Naive thymus-derived CD4-positive, alpha-beta T cell (primary cell): ENCODE measurements at regions of chr18 and their contacts with region 1.

Region 1: DNA sequence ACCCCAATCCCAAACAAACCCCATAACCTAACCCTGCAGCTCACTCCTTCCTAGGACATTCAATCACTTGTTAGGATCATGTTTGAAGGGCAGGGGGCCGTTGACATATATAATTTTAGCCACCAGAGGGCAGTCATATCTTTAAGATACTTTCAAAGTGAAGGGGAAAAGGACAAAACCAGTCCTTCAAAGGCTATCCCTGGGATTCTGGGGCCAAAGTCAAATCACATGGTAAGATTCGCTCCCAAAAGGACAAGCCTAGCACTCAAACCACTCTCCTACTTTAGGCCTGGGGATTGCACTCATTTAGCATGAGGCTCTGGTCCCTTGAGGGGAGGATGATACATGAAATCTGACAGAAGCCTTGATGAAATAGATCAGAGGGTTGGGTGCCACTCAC is 44.6 kb downstream of the HAUS1 start:
- DNase-seq: peak; percentile 14 to 65 (median 51)
- ATAC-seq: peak; percentile 70
- H3K4me3 ChIP-seq: no peak overlapping the region
- H3K4me3 Mint-ChIP-seq: peak overlapping the region in 6 of 10 donors; percentile 5 to 39 (median 28)
- H3K27ac ChIP-seq: no peak overlapping the region
- H3K27ac Mint-ChIP-seq: peak overlapping the region; percentile 9 to 87 (median 75)
- H3K4me1 ChIP-seq: peaks cover 21 to 43% of the 10 kb centered on the region in 2 donors
- H3K4me1 Mint-ChIP-seq: peaks cover 9 to 48% (median 45%) of the 10 kb centered on the region in 7 donors
- H3K27me3 ChIP-seq: no peaks in the 10 kb centered on the region
- H3K27me3 Mint-ChIP-seq: peaks cover 0 to 3% (median 0%) of the 10 kb centered on the region in 5 donors

Region 2: GRCh38 chr18:45755934-45756333 is 392.9 kb before region 1 on chr18:
- CTCF ChIA-PET with region 1: no interaction called
- POLR2A ChIA-PET with region 1: no interaction called
- intact Hi-C with region 1: no loop called
- DNase-seq: no peak
- ATAC-seq: no peak
- H3K4me3 ChIP-seq: no peak overlapping the region
- H3K4me3 Mint-ChIP-seq: no peak overlapping the region
- H3K27ac ChIP-seq: no peak overlapping the region
- H3K27ac Mint-ChIP-seq: no peak overlapping the region
- H3K4me1 ChIP-seq: no peaks in the 10 kb centered on the region
- H3K4me1 Mint-ChIP-seq: peaks cover 0 to 2% (median 0%) of the 10 kb centered on the region in 7 donors
- H3K27me3 ChIP-seq: no peaks in the 10 kb centered on the region
- H3K27me3 Mint-ChIP-seq: peaks cover 10 to 31% (median 25%) of the 10 kb centered on the region in 5 donors

Region 3: GRCh38 chr18:46097801-46098615 is 50.8 kb before region 1 on chr18 and contains the start of gene ATP5F1A:
- CTCF ChIA-PET with region 1: no interaction called
- POLR2A ChIA-PET with region 1: no interaction called
- intact Hi-C with region 1: no loop called
- DNase-seq: peak; percentile 69 to 86 (median 80)
- ATAC-seq: peak; percentile 94
- H3K4me3 ChIP-seq: peak within 1 kb of the TSS; percentile 92
- H3K4me3 Mint-ChIP-seq: peak within 1 kb of the TSS; percentile 92 to 99 (median 96)
- H3K27ac ChIP-seq: peak within 1 kb of the TSS; percentile 94
- H3K27ac Mint-ChIP-seq: peak within 1 kb of the TSS; percentile 94 to 99 (median 97)
- H3K4me1 ChIP-seq: peaks cover 18 to 32% of the 10 kb centered on the region in 2 donors
- H3K4me1 Mint-ChIP-seq: peaks cover 18 to 43% (median 35%) of the 10 kb centered on the region in 7 donors
- H3K27me3 ChIP-seq: no peaks in the 10 kb centered on the region
- H3K27me3 Mint-ChIP-seq: peaks cover 0 to 2% (median 0%) of the 10 kb centered on the region in 5 donors
- total RNA-seq, gene ATP5F1A: 181 to 311 (median 212) TPM

Region 4: GRCh38 chr18:46213295-46213694 is 64.5 kb after region 1 on chr18:
- CTCF ChIA-PET with region 1: interaction called, 10 read pairs
- POLR2A ChIA-PET with region 1: no interaction called
- intact Hi-C with region 1: loop called (anchors 1 kb)
- DNase-seq: peak in 7 of 9 donors; percentile 20 to 47 (median 31)
- ATAC-seq: peak; percentile 69
- H3K4me3 ChIP-seq: no peak overlapping the region
- H3K4me3 Mint-ChIP-seq: peak overlapping the region in 9 of 10 donors; percentile 4 to 72 (median 43)
- H3K27ac ChIP-seq: no peak overlapping the region
- H3K27ac Mint-ChIP-seq: peak overlapping the region in 4 of 9 donors; percentile 27 to 62 (median 56)
- H3K4me1 ChIP-seq: peaks cover 21% of the 10 kb centered on the region in 2 donors
- H3K4me1 Mint-ChIP-seq: peaks cover 40 to 96% (median 84%) of the 10 kb centered on the region in 7 donors
- H3K27me3 ChIP-seq: no peaks in the 10 kb centered on the region
- H3K27me3 Mint-ChIP-seq: no peaks in the 10 kb centered on the region

Region 5: DNA sequence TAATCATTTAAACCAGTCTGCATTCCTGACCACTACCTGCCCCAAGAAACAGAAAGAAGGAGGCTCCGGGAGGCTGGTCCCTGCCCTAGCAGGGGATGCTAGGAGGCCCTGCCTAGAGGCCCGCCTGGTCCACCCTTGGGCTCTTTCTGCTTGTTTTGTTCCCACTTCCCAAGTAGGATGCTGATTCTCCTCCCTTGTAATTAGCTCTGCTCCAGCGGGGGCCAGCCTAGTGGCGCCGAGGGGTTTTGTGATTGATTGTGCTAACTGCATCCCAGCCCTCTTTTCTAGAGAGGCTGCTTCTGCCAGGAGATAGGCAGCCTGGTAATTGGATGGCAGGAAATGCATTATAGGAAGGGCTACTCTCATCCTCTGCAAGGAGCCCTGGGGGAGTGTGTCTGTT is 288.3 kb after region 1 on chr18:
- CTCF ChIA-PET with region 1: no interaction called
- POLR2A ChIA-PET with region 1: no interaction called
- intact Hi-C with region 1: no loop called
- DNase-seq: no peak
- ATAC-seq: no peak
- H3K4me3 ChIP-seq: no peak overlapping the region
- H3K4me3 Mint-ChIP-seq: no peak overlapping the region
- H3K27ac ChIP-seq: no peak overlapping the region
- H3K27ac Mint-ChIP-seq: no peak overlapping the region
- H3K4me1 ChIP-seq: no peaks in the 10 kb centered on the region
- H3K4me1 Mint-ChIP-seq: peaks cover 0 to 5% (median 0%) of the 10 kb centered on the region in 7 donors
- H3K27me3 ChIP-seq: no peaks in the 10 kb centered on the region
- H3K27me3 Mint-ChIP-seq: peaks cover 0 to 12% (median 5%) of the 10 kb centered on the region in 5 donors

Region 6: DNA sequence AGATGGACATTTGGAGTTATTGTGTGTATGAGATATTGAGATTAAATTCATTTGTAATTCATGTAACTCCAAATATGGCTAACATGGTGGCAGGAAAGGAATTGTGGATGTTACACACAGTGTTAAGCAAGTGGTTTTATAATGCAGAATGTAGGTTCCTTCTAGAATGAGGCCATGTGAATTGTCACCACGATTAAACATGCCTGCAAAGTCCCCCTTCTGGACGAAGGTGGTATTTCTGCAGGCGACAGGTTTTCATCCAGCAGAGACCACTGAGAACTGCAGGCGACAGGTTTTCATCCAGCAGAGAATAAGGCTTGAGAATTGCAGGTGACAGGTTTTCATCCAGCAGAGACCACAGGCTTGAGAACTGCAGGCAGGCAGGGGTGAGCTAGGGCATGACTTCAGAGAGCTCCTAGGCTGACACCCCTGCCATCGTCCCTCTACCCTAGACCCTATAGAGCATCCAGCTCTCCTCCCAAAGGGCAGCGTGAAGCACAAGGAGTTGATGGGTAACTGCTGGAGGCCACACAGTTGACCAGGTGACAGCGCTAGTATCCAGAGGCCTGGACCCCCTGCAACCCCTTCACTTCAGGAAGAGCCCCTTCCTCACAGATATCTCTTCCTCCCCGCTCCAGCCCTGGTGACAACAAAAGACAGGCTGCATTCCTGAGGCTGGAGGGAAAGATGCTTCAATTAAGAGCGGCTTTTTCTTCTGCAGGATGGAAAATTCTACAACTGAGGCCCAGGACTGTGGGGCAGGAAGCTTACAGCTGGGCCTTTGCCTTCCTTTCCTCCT is 332.4 kb after region 1 on chr18:
- CTCF ChIA-PET with region 1: interaction called, 8 read pairs
- POLR2A ChIA-PET with region 1: no interaction called
- intact Hi-C with region 1: loop called in 1 of 2 experiments (anchors 1 kb)
- DNase-seq: peak in 6 of 9 donors; percentile 31 to 60 (median 40)
- ATAC-seq: peak; percentile 67
- H3K4me3 ChIP-seq: no peak overlapping the region
- H3K4me3 Mint-ChIP-seq: no peak overlapping the region
- H3K27ac ChIP-seq: no peak overlapping the region
- H3K27ac Mint-ChIP-seq: no peak overlapping the region
- H3K4me1 ChIP-seq: no peaks in the 10 kb centered on the region
- H3K4me1 Mint-ChIP-seq: no peaks in the 10 kb centered on the region
- H3K27me3 ChIP-seq: no peaks in the 10 kb centered on the region
- H3K27me3 Mint-ChIP-seq: peaks cover 0 to 22% (median 10%) of the 10 kb centered on the region in 5 donors

Region 7: DNA sequence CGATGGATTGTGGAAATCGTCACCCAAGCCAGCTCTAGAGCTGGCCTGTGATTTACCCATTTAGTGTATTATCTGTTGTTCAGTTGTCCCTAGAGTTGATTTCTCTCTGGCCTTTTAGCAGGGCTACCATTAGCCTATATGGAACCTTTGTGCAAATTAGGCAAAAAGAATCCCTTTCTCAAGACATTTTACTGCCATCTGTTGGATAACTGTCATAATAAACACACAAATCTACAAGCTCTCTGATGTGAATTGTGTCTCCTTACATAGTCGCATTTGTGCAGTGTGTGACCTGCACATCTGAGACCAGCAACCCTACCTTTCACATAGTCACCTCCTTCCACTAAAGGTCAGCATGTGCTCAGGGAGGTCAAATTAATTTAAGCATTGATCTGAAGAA is 474.2 kb after region 1 on chr18:
- CTCF ChIA-PET with region 1: interaction called, 3 read pairs
- POLR2A ChIA-PET with region 1: no interaction called
- intact Hi-C with region 1: loop called (anchors 1 kb)
- DNase-seq: no peak
- ATAC-seq: no peak
- H3K4me3 ChIP-seq: peak overlapping the region; percentile 31
- H3K4me3 Mint-ChIP-seq: peak overlapping the region in 9 of 10 donors; percentile 44 to 72 (median 58)
- H3K27ac ChIP-seq: no peak overlapping the region
- H3K27ac Mint-ChIP-seq: peak overlapping the region; percentile 14 to 87 (median 78)
- H3K4me1 ChIP-seq: peaks cover 26 to 29% of the 10 kb centered on the region in 2 donors
- H3K4me1 Mint-ChIP-seq: peaks cover 21 to 51% (median 47%) of the 10 kb centered on the region in 7 donors
- H3K27me3 ChIP-seq: no peaks in the 10 kb centered on the region
- H3K27me3 Mint-ChIP-seq: peaks cover 0 to 3% (median 0%) of the 10 kb centered on the region in 5 donors